ENCODE measurements at regions of chr22 and their contacts with region 1.

Region 1: DNA sequence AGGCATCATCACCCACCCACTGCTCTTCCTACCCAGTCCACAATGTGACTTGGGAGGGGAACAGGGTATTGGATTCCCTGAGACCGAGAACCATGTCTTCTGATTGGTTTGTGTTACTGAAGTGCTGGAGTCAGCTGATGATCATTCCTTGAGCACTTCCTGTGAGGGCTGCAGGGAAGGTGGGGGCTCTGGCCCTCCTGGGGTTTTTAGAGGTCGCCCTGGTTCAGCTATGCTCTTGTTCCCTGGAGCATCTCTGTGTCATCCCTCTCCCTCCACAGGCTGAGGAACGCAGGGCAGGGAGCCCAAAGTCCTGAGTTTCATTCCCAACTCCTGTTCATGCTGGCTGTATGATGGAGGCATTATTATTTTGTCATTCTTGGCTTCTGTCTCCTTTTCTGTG is 6.7 kb downstream of the ZC3H7B start:
- DNase-seq: no peak
- H3K4me3 ChIP-seq: no peak overlapping the region
- H3K27ac ChIP-seq: no peak overlapping the region
- H3K4me1 ChIP-seq: peaks cover 28% of the 10 kb centered on the region
- H3K27me3 ChIP-seq: no peaks in the 10 kb centered on the region
- CTCF ChIP-seq: no peak

Region 2: GRCh38 chr22:41274856-41275255 is 33.2 kb before region 1 on chr22:
- CTCF ChIA-PET with region 1: no interaction called
- POLR2A ChIA-PET with region 1: interaction called, 14 read pairs
- intact Hi-C with region 1: no loop called
- DNase-seq: peak in 1 of 2 experiments; percentile 5
- H3K4me3 ChIP-seq: no peak overlapping the region
- H3K27ac ChIP-seq: no peak overlapping the region
- H3K4me1 ChIP-seq: no peaks in the 10 kb centered on the region
- H3K27me3 ChIP-seq: no peaks in the 10 kb centered on the region
- CTCF ChIP-seq: no peak

Region 3: GRCh38 chr22:41429232-41429950 is 121.3 kb after region 1 on chr22:
- CTCF ChIA-PET with region 1: no interaction called
- POLR2A ChIA-PET with region 1: no interaction called
- intact Hi-C with region 1: no loop called
- DNase-seq: no peak
- H3K4me3 ChIP-seq: no peak overlapping the region
- H3K27ac ChIP-seq: no peak overlapping the region
- H3K4me1 ChIP-seq: no peaks in the 10 kb centered on the region
- H3K27me3 ChIP-seq: no peaks in the 10 kb centered on the region
- CTCF ChIP-seq: no peak